ENCODE measurements at regions of chr5 and their contacts with region 1.

Region 1: DNA sequence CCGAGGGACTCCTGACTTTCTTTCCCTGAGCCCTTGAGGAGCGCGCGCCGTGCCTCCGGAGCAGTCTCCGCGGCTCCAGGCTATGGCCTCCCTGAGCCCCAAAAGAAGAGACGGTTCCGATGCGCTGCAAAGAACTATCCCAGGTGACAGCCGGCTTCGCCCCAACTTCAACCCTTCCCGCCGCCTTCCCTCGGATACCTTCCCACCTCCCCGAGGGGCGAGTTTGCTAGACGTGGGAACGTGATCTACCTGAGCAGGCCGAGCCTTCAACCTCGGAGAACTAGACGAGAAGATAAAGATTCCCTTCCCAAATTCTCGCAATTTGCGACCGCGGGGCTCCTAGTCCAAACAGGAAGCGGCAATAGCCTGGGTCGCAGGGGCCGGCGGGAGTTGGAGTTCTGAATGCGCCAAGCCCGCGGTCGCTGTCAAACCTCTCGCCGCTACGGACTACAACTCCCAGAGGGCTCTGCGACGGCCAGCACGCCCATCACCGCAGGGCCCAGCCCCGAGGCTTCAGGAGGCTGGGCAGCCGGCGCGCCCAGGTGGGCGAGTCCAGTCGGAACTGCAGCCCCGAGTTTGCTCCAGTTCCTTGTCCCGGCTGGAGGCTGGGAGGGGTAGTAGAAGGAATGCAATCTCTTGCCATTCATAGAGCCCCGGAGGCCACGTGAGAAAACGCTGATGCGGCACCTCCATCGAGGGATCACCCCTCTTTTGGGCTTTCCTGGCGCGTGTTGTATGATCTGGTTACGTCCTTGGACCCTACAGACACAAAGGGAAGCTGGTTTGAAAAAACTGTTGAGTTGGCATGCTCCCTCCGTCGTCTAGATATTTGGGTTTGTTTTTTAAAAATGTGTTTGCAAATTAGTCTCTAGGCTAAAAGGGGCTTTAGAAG is at the start of gene SLC38A9:
- DNase-seq: peak; percentile 95 to 96
- ATAC-seq: peak; percentile 100
- H3K4me3 ChIP-seq: peak within 1 kb of the TSS; percentile 54 to 98 (median 82)
- H3K27ac ChIP-seq: peak within 1 kb of the TSS in 8 of 10 donors; percentile 46 to 88 (median 66)
- H3K4me1 ChIP-seq: peaks cover 0 to 15% (median 13%) of the 10 kb centered on the region in 9 donors
- H3K27me3 ChIP-seq: no peaks in the 10 kb centered on the region
- CTCF ChIP-seq: no peak
- total RNA-seq, gene SLC38A9: 5.2 to 9.1 (median 6.8) TPM

Region 2: GRCh38 chr5:55577353-55578060 is 134.7 kb before region 1 on chr5:
- intact Hi-C with region 1: no loop called
- DNase-seq: peak; percentile 50 to 80
- ATAC-seq: peak; percentile 90 to 96 (median 92)
- H3K4me3 ChIP-seq: no peak overlapping the region
- H3K27ac ChIP-seq: peak overlapping the region; percentile 63 to 93 (median 77)
- H3K4me1 ChIP-seq: peaks cover 14 to 56% (median 48%) of the 10 kb centered on the region in 9 donors
- H3K27me3 ChIP-seq: no peaks in the 10 kb centered on the region
- CTCF ChIP-seq: no peak

Region 3: DNA sequence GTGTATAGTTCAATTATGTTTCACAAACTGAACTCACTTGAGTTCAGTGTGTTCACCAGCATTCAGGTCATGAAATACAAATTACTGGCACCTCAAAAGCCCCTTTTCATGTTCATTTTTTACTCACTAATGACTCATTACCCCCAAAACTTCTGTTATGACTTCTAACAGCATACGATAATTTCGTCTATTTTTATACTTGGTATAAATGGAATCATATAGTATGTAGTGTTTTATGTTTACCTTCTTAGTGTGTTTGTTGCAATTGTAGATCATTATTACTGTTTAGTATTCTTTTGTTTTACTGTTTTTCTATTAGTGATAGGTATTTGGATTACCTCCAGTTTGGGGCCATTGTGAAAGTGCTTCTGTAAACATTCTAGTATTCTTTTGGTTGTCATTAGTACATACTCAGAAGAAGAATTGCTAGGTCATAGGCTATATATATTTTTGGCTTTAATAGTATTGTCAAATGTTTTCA is 59.0 kb after region 1 on chr5:
- intact Hi-C with region 1: no loop called
- DNase-seq: no peak
- ATAC-seq: no peak
- H3K4me3 ChIP-seq: no peak overlapping the region
- H3K27ac ChIP-seq: no peak overlapping the region
- H3K4me1 ChIP-seq: peaks cover 0 to 5% (median 0%) of the 10 kb centered on the region in 9 donors
- H3K27me3 ChIP-seq: no peaks in the 10 kb centered on the region
- CTCF ChIP-seq: no peak

Region 4: GRCh38 chr5:55913466-55914413 is 201.5 kb after region 1 on chr5:
- intact Hi-C with region 1: loop called in 1 of 10 experiments (anchors 10 kb)
- DNase-seq: no peak
- ATAC-seq: no peak
- H3K4me3 ChIP-seq: no peak overlapping the region
- H3K27ac ChIP-seq: no peak overlapping the region
- H3K4me1 ChIP-seq: no peaks in the 10 kb centered on the region
- H3K27me3 ChIP-seq: no peaks in the 10 kb centered on the region
- CTCF ChIP-seq: no peak

Region 5: DNA sequence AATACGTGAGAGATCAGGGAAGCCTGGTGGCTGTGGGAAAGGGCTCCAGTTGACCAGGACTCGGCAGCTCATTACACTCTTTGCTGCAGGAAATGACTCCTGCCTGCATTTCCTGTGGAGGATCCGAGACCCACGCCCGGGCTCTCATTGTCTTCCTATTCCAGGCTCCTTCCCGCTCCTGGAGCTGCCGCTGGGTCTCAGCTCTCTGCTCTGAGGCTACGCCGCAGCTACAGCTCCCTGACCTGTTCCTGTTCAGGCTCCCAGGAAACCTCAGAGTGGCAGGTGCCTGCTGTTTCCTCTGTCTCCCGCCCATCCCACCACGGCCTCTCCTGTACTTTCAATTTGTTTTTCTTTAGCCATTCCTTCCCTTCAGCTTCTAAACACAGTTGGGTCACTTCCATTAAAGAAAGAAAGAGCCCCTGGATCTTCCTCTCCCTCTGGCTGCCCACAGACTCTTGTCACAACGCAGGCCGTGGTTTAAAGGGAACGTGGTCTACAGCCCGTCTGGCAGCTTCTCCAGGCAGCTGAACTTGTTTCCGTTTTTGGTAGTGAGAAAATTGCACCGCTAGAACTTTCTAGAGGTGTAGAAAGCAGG is 211.1 kb after region 1 on chr5:
- intact Hi-C with region 1: loop called in 3 of 10 experiments (anchors 10 kb)
- DNase-seq: peak in 1 of 2 donors; percentile 23
- ATAC-seq: peak; percentile 37 to 86 (median 64)
- H3K4me3 ChIP-seq: peak overlapping the region in 9 of 10 donors; percentile 20 to 60 (median 48)
- H3K27ac ChIP-seq: peak overlapping the region in 8 of 10 donors; percentile 18 to 82 (median 64)
- H3K4me1 ChIP-seq: peaks cover 0 to 30% (median 0%) of the 10 kb centered on the region in 9 donors
- H3K27me3 ChIP-seq: no peaks in the 10 kb centered on the region
- CTCF ChIP-seq: no peak

Region 6: DNA sequence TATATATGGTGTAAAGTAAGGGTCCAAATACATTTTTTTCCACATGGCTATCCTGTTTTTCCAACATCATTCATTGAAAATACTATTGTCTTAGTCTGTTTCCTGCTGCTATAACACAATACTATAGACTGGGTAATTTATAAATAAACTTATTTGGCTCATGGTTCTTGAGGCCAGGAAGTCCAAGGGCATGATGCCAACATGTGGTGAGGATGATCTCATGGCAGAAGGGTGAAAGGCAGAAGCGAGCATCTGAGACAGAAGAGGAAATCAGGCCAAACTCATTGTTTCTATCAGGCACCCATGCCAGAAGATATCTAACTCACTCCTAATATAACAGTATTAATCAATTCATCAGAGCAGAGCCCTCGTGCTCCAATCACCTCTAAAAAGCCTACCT is 478.3 kb after region 1 on chr5:
- intact Hi-C with region 1: loop called in 2 of 10 experiments (anchors 10 kb)
- DNase-seq: peak in 1 of 2 donors; percentile 52
- ATAC-seq: peak in 6 of 8 donors; percentile 20 to 73 (median 61)
- H3K4me3 ChIP-seq: no peak overlapping the region
- H3K27ac ChIP-seq: peak overlapping the region in 2 of 10 donors; percentile 29 to 37
- H3K4me1 ChIP-seq: peaks cover 0 to 27% (median 4%) of the 10 kb centered on the region in 9 donors
- H3K27me3 ChIP-seq: no peaks in the 10 kb centered on the region
- CTCF ChIP-seq: no peak

Region 7: GRCh38 chr5:56447232-56447631 is 735.0 kb after region 1 on chr5:
- intact Hi-C with region 1: no loop called
- DNase-seq: no peak
- ATAC-seq: peak in 3 of 8 donors; percentile 39 to 84 (median 46)
- H3K4me3 ChIP-seq: no peak overlapping the region
- H3K27ac ChIP-seq: no peak overlapping the region
- H3K4me1 ChIP-seq: no peaks in the 10 kb centered on the region
- H3K27me3 ChIP-seq: no peaks in the 10 kb centered on the region
- CTCF ChIP-seq: no peak

Region 8: DNA sequence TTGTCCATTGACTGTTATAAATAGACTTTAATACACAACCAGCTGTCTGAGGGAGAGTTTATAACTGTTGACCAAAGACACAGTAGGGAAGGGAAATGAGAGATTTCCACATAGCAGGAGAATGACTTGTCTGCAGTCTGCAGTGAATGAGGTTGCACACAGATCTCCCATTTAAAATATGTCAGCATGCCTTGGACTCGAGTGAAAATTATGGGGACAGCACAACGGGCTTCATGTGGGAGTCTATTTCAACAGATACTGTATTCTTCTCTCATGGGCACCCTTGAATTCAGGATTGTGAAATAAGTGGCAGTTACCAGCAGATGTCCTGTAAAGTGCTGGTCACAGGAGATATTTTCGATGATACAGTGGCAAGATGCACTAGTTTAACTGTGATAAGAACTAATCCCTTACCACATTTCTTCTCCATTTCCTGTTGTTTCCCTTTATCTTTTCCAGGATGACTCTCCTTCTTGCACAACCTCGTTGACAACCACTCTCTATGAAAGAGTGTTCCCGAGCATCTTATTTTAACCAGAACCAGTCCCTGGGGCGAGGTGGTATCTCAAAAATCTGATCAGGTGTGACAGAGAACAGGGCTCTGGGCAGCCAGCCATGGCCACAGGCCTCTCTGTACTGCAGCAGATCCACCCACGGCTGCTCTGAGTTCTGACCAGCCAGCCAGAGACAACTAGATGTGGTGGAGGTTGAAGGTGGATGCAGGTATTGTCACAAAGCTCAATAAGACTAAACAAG is 1051.7 kb after region 1 on chr5:
- intact Hi-C with region 1: no loop called
- DNase-seq: no peak
- ATAC-seq: peak in 5 of 8 donors; percentile 19 to 80 (median 30)
- H3K4me3 ChIP-seq: no peak overlapping the region
- H3K27ac ChIP-seq: peak overlapping the region in 1 of 10 donors; percentile 12
- H3K4me1 ChIP-seq: peaks cover 0 to 50% (median 36%) of the 10 kb centered on the region in 9 donors
- H3K27me3 ChIP-seq: no peaks in the 10 kb centered on the region
- CTCF ChIP-seq: no peak

Measured in heart right ventricle (tissue), 16 donors.